CD4-positive, alpha-beta T cell (primary cell): ENCODE measurements at regions of chr5 and their contacts with region 1.

Region 1: DNA sequence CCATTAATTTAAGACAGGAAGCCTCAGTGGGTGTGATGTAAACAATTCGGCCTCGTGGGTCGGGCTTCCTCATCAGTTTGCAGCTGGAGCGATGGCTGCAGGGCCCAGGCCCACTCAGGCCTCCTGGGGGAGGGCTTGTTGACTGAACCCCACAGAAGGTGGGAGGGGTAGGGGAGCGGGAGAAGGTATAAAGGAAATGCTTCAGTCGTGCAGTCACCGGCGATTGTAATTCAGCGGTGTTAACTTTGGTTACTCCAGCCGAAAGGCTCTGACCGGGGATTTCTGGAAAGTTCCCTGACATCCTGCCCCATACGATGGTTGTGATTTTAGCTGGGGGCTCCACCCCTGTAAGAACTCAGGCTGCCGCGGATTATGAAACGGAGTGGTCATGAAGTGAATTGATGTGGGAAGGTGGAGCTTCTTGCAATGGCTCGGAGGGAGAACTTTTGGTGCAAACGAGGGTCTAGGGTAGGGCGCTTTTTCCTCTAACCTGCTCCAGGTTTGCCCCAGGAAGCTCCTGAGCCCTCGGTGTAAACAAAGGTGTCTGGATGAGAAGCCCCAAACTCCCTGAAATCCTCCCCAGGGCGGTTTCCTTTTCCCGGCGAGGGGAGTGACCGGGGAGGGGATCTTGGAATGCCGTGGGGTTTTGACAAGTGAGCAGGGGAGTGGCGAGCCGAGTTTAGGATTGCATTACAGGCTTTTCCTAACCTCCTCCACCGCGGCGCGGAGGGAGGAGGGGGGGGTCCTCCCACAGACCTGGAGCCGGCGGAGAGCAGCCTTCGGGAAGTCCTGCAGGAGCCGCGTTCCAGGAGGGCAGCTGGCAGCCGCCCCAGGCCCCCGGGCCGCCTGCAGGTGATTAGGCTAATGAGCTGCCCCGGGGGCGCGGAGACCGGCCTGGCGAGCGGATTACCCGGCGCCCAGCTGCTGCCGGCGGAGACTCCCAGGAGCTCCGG is 215.5 kb downstream of the PDZD2 start:
- DNase-seq: peak in 3 of 14 experiments; percentile 2 to 30 (median 10)
- ATAC-seq: peak; percentile 36
- H3K4me3 ChIP-seq: peak overlapping the region; percentile 48
- H3K4me3 Mint-ChIP-seq: peak overlapping the region; percentile 90
- H3K27ac ChIP-seq: no peak overlapping the region
- H3K27ac Mint-ChIP-seq: peak overlapping the region; percentile 81
- H3K4me1 ChIP-seq: peaks cover 18% of the 10 kb centered on the region
- H3K4me1 Mint-ChIP-seq: peaks cover 29% of the 10 kb centered on the region
- H3K27me3 ChIP-seq: peaks cover 24% of the 10 kb centered on the region in 2 experiments
- H3K27me3 Mint-ChIP-seq: peaks cover 23% of the 10 kb centered on the region
- CTCF ChIP-seq: no peak

Region 2: GRCh38 chr5:31427013-31427723 is 427.3 kb before region 1 on chr5:
- CTCF ChIA-PET with region 1: no interaction called
- POLR2A ChIA-PET with region 1: no interaction called
- intact Hi-C with region 1: no loop called
- DNase-seq: no peak
- ATAC-seq: no peak
- H3K4me3 ChIP-seq: no peak overlapping the region
- H3K4me3 Mint-ChIP-seq: no peak overlapping the region
- H3K27ac ChIP-seq: no peak overlapping the region
- H3K27ac Mint-ChIP-seq: no peak overlapping the region
- H3K4me1 ChIP-seq: no peaks in the 10 kb centered on the region
- H3K4me1 Mint-ChIP-seq: peaks cover 5% of the 10 kb centered on the region
- H3K27me3 ChIP-seq: no peaks in the 10 kb centered on the region
- H3K27me3 Mint-ChIP-seq: no peaks in the 10 kb centered on the region
- CTCF ChIP-seq: no peak

Region 3: GRCh38 chr5:31866166-31866565 is 11.7 kb after region 1 on chr5:
- CTCF ChIA-PET with region 1: interaction called, 3 read pairs
- POLR2A ChIA-PET with region 1: interaction called, 48 read pairs
- intact Hi-C with region 1: no loop called
- DNase-seq: peak in 8 of 14 experiments; percentile 7 to 53 (median 19)
- ATAC-seq: peak; percentile 58
- H3K4me3 ChIP-seq: no peak overlapping the region
- H3K4me3 Mint-ChIP-seq: peak overlapping the region; percentile 68
- H3K27ac ChIP-seq: no peak overlapping the region
- H3K27ac Mint-ChIP-seq: peak overlapping the region; percentile 85
- H3K4me1 ChIP-seq: peaks cover 9% of the 10 kb centered on the region
- H3K4me1 Mint-ChIP-seq: peaks cover 68% of the 10 kb centered on the region
- H3K27me3 ChIP-seq: no peaks in the 10 kb centered on the region
- H3K27me3 Mint-ChIP-seq: no peaks in the 10 kb centered on the region
- CTCF ChIP-seq: no peak

Region 4: GRCh38 chr5:32076699-32077695 is 222.5 kb after region 1 on chr5:
- CTCF ChIA-PET with region 1: interaction called, 3 read pairs
- POLR2A ChIA-PET with region 1: interaction called, 5 read pairs
- intact Hi-C with region 1: loop called (anchors 1 to 10 kb)
- DNase-seq: peak in 12 of 14 experiments; percentile 9 to 61 (median 30)
- ATAC-seq: peak; percentile 56
- H3K4me3 ChIP-seq: no peak overlapping the region
- H3K4me3 Mint-ChIP-seq: no peak overlapping the region
- H3K27ac ChIP-seq: no peak overlapping the region
- H3K27ac Mint-ChIP-seq: no peak overlapping the region
- H3K4me1 ChIP-seq: no peaks in the 10 kb centered on the region
- H3K4me1 Mint-ChIP-seq: no peaks in the 10 kb centered on the region
- H3K27me3 ChIP-seq: no peaks in the 10 kb centered on the region
- H3K27me3 Mint-ChIP-seq: no peaks in the 10 kb centered on the region
- CTCF ChIP-seq: peak; percentile 78